PC-9 (cell line): ENCODE measurements at regions of chr2 and their contacts with region 1.

Region 1: GRCh38 chr2:226791487-226792081 is 8.0 kb downstream of the IRS1 start:
- DNase-seq: peak; percentile 69 to 89
- H3K4me3 ChIP-seq: peak overlapping the region; percentile 95
- H3K27ac ChIP-seq: peak overlapping the region; percentile 84
- H3K4me1 ChIP-seq: peaks cover 44% of the 10 kb centered on the region
- H3K27me3 ChIP-seq: no peaks in the 10 kb centered on the region
- CTCF ChIP-seq: no peak

Region 2: DNA sequence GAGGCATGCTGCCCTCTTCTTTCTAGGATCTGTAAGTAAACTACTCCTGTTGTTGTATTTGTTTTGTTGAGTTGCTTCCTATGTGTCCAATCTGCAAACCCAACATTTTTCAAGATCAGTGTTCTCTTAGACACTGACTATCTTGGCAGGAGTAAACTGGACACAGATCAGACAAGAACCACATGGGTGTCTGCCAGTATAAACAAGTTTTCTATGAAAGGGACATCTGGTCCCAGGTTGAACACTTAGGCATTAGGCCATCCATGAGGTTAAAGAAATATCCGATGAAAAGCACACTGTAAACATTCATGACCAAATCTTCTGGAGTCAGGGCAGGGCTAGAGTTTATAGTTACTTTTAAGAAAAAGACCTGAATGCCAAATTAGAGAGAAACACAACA is 950.3 kb before region 1 on chr2:
- CTCF ChIA-PET with region 1: no interaction called
- POLR2A ChIA-PET with region 1: no interaction called
- intact Hi-C with region 1: no loop called
- DNase-seq: no peak
- H3K4me3 ChIP-seq: no peak overlapping the region
- H3K27ac ChIP-seq: no peak overlapping the region
- H3K4me1 ChIP-seq: no peaks in the 10 kb centered on the region
- H3K27me3 ChIP-seq: no peaks in the 10 kb centered on the region
- CTCF ChIP-seq: no peak

Region 3: GRCh38 chr2:226215902-226216503 is 575.6 kb before region 1 on chr2:
- CTCF ChIA-PET with region 1: interaction called, 9 read pairs
- POLR2A ChIA-PET with region 1: no interaction called
- intact Hi-C with region 1: loop called (anchors 10 kb)
- DNase-seq: peak in 1 of 2 experiments; percentile 37
- H3K4me3 ChIP-seq: no peak overlapping the region
- H3K27ac ChIP-seq: no peak overlapping the region
- H3K4me1 ChIP-seq: no peaks in the 10 kb centered on the region
- H3K27me3 ChIP-seq: no peaks in the 10 kb centered on the region
- CTCF ChIP-seq: peak; percentile 63

Region 4: DNA sequence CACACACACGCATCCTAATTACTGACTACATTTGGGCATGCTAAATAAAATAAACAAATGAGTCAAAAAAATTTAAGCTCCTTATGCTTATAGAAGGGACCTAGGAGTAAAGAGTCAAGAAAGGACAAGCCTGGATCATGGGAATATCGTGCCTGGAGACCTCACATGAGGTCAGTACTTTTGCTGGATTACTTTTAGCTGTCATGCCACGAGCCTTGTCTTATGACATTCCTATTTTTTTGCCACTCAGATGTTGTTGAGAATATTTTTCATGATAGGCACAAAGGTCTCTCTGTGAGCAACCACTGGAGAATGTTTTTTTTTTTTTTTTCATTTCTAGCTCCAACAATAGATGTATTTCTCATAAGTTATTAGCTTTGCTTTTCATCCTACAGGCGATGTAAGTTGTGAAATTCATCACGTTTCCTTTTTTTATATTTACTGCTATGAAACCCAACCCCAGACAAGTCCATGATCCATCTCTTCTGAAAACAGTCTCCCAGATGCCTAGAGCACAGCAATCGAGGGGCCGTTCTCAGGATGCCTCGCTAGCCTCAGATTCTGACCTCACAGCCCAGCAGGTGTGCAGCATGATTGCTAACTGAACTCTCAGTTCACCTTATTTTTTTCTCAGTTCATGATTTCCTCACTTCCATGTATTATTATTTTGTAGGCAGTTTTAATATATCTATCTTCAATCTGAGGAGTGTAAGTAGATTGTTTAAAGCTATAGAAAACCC is 456.4 kb before region 1 on chr2:
- CTCF ChIA-PET with region 1: no interaction called
- POLR2A ChIA-PET with region 1: interaction called, 3 read pairs
- intact Hi-C with region 1: loop called (anchors 5 kb)
- DNase-seq: peak in 1 of 2 experiments; percentile 29
- H3K4me3 ChIP-seq: no peak overlapping the region
- H3K27ac ChIP-seq: no peak overlapping the region
- H3K4me1 ChIP-seq: peaks cover 16% of the 10 kb centered on the region
- H3K27me3 ChIP-seq: no peaks in the 10 kb centered on the region
- CTCF ChIP-seq: no peak

Region 5: DNA sequence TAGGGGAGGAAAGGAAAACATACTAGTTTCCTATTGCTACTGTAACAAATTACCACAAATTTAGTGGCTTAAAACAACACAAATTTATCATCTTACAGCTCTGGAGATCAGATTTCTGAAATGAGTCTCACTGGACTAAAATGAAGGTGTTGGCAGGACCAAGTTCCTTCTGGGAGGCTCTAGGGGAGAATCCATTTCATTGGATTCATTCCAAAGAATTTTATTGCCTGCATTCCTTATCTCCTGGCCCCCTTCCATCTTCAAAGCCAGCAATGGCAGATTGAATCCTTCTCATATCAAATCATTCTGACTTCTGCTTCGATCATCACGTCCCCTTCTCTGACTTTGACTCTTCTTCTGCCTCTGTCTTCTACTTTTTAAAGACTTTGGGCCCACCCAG is 242.9 kb before region 1 on chr2:
- CTCF ChIA-PET with region 1: no interaction called
- POLR2A ChIA-PET with region 1: no interaction called
- intact Hi-C with region 1: no loop called
- DNase-seq: no peak
- H3K4me3 ChIP-seq: no peak overlapping the region
- H3K27ac ChIP-seq: no peak overlapping the region
- H3K4me1 ChIP-seq: no peaks in the 10 kb centered on the region
- H3K27me3 ChIP-seq: no peaks in the 10 kb centered on the region
- CTCF ChIP-seq: no peak

Region 6: DNA sequence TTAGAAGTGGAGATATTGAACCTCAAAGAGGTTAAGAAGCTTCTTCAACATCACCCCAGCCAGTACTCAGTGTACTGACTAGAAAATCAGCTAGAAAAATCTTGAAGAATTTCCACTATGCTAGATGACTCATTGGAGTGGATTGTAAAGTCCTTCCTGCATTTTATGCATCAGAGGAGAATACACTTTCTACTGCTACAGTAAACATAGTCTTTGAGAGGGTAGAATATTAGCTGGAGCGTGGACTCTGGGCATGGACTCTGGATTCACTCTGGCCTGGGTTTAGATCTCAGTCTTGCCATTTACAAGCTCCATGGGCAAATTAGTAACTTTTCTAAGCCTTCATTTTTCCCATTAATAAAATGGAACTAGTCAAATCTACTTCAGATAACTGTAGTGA is 207.9 kb before region 1 on chr2:
- CTCF ChIA-PET with region 1: no interaction called
- POLR2A ChIA-PET with region 1: no interaction called
- intact Hi-C with region 1: loop called (anchors 2 kb)
- DNase-seq: peak in 1 of 2 experiments; percentile 83
- H3K4me3 ChIP-seq: no peak overlapping the region
- H3K27ac ChIP-seq: peak overlapping the region; percentile 31; the same call in 1 of the 2 replicates
- H3K4me1 ChIP-seq: peaks cover 19% of the 10 kb centered on the region
- H3K27me3 ChIP-seq: no peaks in the 10 kb centered on the region
- CTCF ChIP-seq: no peak

Region 7: DNA sequence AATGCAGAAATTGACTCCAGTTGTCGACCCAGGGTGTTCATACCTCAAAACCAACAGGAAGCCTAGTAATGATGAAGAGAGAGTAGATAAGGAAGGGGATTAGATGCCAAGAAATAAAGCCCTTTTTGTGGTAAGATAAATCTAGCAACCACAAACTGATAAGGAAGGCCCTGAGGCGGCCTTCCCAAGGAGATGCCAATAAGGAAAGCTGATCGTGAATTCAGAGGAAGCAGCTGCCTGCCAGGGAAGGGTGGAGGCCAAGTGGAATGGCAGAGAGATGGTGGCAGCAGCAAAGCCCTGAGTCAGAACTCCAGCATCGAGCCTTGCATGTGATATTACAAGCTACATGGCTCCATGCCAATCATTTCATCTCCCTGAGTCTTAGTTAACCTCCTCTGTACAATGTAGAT is 118.3 kb before region 1 on chr2:
- CTCF ChIA-PET with region 1: no interaction called
- POLR2A ChIA-PET with region 1: no interaction called
- intact Hi-C with region 1: loop called (anchors 1 kb)
- DNase-seq: peak; percentile 92 to 97
- H3K4me3 ChIP-seq: no peak overlapping the region
- H3K27ac ChIP-seq: peak overlapping the region; percentile 66
- H3K4me1 ChIP-seq: peaks cover 34% of the 10 kb centered on the region
- H3K27me3 ChIP-seq: no peaks in the 10 kb centered on the region
- CTCF ChIP-seq: no peak

Region 8: DNA sequence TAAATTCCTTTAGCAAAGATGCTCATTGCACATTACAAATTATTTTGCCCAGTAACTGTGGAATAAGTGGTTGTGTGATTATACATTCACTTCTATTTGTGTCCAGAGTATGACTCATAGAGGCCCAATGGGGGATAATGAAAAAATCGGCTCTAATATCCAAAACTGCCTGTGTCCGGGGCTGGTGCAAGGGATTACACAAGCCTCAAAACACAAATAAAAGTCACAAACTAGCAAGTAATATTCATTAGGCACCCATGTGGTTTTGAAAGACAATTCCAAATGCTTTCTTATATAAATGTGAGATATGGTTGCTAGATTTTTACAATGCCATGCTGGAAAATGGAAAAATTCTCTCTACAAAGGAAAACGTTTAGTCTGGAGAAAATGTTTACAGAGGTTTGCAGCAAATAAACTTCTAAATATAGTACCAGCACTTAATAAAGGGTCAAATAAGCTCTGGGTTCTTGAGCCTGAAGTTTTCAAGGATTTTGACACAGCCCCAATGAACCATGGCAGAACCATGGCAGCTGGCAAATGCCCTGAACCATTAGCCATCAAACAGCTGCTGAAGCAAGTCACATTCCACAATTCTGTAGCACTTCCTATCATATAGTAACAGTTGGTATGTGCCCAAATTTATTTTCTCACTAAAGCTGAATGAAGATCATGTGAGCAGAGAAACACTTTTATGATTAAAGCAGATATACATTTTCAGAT is 32.5 kb before region 1 on chr2:
- CTCF ChIA-PET with region 1: no interaction called
- POLR2A ChIA-PET with region 1: no interaction called
- intact Hi-C with region 1: loop called (anchors 5 kb)
- DNase-seq: no peak
- H3K4me3 ChIP-seq: no peak overlapping the region
- H3K27ac ChIP-seq: 0 out of 2 replicates have a peak overlapping the region, but pooled peaks have one; percentile 5
- H3K4me1 ChIP-seq: peaks cover 18% of the 10 kb centered on the region
- H3K27me3 ChIP-seq: no peaks in the 10 kb centered on the region
- CTCF ChIP-seq: no peak